ENCODE measurements at regions of chrX and their contacts with region 1.

Region 1: DNA sequence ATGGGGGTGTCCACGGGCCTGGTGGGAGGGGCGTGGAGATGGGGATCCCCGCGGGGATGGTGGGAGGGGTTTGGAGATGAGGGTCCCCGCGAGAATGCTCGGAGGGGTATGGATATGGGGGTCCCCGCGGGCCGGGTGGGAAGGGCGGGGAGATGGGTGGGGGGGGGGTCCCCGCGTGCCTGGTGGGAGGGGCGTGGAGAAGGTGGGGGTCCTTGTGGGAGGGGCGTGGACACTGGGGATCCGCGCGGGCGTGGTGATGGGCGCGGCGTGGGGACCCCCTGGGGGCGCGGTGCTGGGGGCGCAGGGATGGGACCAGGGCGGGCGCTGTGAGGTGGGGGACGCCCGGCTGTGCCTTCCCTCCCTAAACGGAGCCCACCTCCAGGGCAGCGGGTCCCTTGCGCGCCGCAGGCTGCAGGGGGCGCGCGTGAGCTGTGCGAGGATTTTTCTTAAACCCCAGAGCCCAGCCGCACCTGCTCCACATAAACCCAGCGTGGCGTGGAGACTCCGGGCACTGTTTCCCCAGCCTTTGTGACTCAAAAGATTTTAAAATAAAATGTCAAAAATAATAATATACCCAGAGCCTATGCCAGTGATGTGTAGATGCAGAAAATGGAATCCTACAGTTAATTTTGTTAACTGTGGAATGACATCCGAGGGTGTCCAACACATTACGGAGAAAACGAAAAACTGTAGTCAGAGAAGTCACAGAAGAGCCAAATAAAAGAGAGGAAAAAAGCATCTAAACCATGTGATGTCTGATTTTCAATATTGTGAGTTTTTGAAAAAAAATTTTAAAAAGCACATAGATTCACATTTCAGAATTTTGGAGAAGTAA is 1.5 kb upstream of the ASMTL start:
- DNase-seq: peak; percentile 92
- ATAC-seq: peak; percentile 29
- H3K4me3 Mint-ChIP-seq: peak overlapping the region; percentile 63
- H3K27ac Mint-ChIP-seq: peak overlapping the region; percentile 50
- H3K4me1 Mint-ChIP-seq: peaks cover 32% of the 10 kb centered on the region
- H3K27me3 Mint-ChIP-seq: no peaks in the 10 kb centered on the region
- CTCF ChIP-seq: peak; percentile 37

Region 2: GRCh38 chrX:1391707-1392375 is 62.3 kb before region 1 on chrX and contains the start of gene SLC25A6:
- CTCF ChIA-PET with region 1: no interaction called
- POLR2A ChIA-PET with region 1: no interaction called
- intact Hi-C with region 1: loop called (anchors 1 kb)
- DNase-seq: peak; percentile 100
- ATAC-seq: peak; percentile 96
- H3K4me3 Mint-ChIP-seq: peak within 1 kb of the TSS; percentile 93
- H3K27ac Mint-ChIP-seq: peak within 1 kb of the TSS; percentile 93
- H3K4me1 Mint-ChIP-seq: peaks cover 47% of the 10 kb centered on the region
- H3K27me3 Mint-ChIP-seq: no peaks in the 10 kb centered on the region
- CTCF ChIP-seq: no peak
- total RNA-seq, gene SLC25A6: 436 and 472 TPM in 2 replicates

Region 3: DNA sequence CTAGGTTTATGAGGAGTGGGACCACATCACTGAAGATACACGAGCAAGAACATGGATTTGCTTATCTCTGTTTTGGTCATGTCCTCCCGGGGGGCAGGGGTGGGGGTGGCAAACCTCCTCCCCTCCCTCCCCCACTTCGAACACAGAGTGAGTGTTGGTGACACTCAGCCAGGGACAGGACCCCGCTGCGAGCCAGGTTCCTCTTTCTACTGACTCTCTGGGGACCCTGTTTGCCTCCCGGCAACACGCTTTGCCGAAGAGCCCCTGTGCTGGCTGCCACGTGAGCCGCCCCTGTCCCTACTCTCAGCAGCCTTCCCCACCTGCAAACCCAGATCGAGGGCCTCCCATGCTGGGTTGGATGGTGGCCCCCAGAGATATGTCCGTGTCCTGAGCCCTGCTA is 48.1 kb after region 1 on chrX:
- CTCF ChIA-PET with region 1: no interaction called
- POLR2A ChIA-PET with region 1: no interaction called
- intact Hi-C with region 1: loop called (anchors 1 kb)
- DNase-seq: peak; percentile 73
- ATAC-seq: peak; percentile 85
- H3K4me3 Mint-ChIP-seq: peak overlapping the region; percentile 66
- H3K27ac Mint-ChIP-seq: no peak overlapping the region
- H3K4me1 Mint-ChIP-seq: peaks cover 25% of the 10 kb centered on the region
- H3K27me3 Mint-ChIP-seq: no peaks in the 10 kb centered on the region
- CTCF ChIP-seq: no peak

Region 4: DNA sequence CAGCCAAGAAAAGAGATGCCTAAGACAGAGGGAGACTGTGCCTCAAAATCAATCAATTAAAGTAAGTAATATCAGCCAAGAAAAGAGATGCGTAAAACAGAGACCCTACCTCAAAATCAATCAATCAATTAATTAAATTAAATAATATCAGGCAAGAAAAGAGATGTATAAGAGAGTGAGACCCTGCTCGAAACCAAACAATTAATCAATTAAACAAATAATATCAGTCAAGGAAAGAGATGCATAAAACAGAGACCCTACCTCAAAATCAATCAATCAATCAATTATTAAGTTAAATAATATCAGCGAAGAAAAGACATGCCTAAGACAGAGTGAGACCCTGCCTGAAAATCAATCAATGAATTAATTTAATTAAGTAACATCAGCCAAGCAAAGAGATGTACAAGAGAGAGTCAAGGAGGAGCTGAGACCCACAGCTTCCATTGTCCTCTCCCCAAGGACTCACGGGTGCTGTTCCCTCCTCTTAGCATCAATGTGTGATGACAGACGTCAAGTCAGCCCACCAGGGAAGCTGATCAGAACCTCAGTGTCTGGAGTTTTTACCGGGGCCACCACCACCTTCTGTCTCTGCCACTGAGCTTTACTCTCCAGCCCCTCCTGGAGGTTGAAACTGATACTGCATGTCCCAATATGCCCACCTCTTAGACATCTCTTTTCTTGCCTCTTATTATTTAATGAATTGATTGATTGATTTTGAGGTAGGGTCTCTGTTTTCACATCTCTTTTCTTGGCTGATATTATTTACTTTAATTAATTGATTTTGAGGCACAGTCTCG is 126.8 kb after region 1 on chrX:
- CTCF ChIA-PET with region 1: no interaction called
- POLR2A ChIA-PET with region 1: no interaction called
- intact Hi-C with region 1: loop called (anchors 1 kb)
- DNase-seq: no peak
- ATAC-seq: peak; percentile 80
- H3K4me3 Mint-ChIP-seq: no peak overlapping the region
- H3K27ac Mint-ChIP-seq: no peak overlapping the region
- H3K4me1 Mint-ChIP-seq: peaks cover 27% of the 10 kb centered on the region
- H3K27me3 Mint-ChIP-seq: no peaks in the 10 kb centered on the region
- CTCF ChIP-seq: peak; percentile 51

Region 5: DNA sequence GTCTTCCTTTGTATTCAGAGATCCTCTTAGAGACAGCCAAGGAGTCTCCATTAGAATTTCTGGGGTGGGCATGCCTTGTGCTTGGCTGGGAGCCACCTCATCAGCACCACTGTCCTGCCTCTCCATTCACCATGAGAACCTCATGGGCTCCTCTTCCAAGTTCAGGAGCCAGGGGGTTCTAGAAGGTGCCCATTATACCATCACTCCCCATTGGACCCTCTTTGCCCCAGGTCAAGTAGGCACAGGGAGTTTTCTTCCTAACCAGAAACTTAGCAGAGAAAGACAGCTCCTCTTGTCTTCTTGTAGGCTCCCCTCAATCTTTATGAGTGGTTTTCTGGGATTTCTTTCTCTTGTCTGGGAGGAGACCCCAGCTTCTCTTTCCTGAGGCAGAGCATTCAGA is 191.8 kb after region 1 on chrX:
- CTCF ChIA-PET with region 1: no interaction called
- POLR2A ChIA-PET with region 1: no interaction called
- intact Hi-C with region 1: no loop called
- DNase-seq: no peak
- ATAC-seq: no peak
- H3K4me3 Mint-ChIP-seq: no peak overlapping the region
- H3K27ac Mint-ChIP-seq: no peak overlapping the region
- H3K4me1 Mint-ChIP-seq: peaks cover 3% of the 10 kb centered on the region
- H3K27me3 Mint-ChIP-seq: peaks cover 12% of the 10 kb centered on the region
- CTCF ChIP-seq: no peak

Region 6: DNA sequence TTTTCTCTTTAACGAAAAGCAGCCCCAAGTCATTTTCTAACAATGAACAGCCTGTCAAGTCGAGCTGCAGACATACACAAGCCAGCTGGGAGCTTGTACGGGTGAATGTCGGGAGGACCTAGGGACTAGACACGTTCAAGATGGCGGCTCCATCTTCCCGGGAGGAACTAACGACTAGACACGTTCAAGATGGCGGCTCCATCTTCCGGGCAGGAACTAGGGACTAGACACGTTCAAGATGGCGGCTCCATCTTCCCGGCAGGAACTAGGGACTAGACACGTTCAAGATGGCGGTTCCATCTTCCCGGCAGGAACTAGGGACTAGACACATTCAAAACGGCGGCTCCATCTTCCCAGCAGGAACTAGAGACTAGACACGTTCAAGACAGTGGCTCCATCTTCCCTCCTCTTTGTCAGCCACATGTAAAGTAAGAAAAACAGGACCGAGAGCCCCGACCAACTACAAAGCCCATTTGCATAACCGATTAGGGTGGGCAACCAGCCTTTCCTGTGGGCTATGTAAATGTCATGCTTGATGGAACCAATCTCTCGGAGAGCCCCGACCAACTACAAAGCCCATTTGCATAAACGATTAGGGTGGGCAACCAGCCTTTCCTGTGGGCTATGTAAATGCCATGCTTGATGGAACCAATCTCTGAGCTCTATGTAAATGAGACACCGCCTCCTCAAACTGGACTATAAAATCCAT is 871.1 kb after region 1 on chrX:
- CTCF ChIA-PET with region 1: no interaction called
- POLR2A ChIA-PET with region 1: no interaction called
- intact Hi-C with region 1: loop called (anchors 2 kb)
- DNase-seq: no peak
- ATAC-seq: peak; percentile 68
- H3K4me3 Mint-ChIP-seq: peak overlapping the region; percentile 83
- H3K27ac Mint-ChIP-seq: peak overlapping the region; percentile 87
- H3K4me1 Mint-ChIP-seq: peaks cover 46% of the 10 kb centered on the region
- H3K27me3 Mint-ChIP-seq: no peaks in the 10 kb centered on the region
- CTCF ChIP-seq: no peak

Region 7: DNA sequence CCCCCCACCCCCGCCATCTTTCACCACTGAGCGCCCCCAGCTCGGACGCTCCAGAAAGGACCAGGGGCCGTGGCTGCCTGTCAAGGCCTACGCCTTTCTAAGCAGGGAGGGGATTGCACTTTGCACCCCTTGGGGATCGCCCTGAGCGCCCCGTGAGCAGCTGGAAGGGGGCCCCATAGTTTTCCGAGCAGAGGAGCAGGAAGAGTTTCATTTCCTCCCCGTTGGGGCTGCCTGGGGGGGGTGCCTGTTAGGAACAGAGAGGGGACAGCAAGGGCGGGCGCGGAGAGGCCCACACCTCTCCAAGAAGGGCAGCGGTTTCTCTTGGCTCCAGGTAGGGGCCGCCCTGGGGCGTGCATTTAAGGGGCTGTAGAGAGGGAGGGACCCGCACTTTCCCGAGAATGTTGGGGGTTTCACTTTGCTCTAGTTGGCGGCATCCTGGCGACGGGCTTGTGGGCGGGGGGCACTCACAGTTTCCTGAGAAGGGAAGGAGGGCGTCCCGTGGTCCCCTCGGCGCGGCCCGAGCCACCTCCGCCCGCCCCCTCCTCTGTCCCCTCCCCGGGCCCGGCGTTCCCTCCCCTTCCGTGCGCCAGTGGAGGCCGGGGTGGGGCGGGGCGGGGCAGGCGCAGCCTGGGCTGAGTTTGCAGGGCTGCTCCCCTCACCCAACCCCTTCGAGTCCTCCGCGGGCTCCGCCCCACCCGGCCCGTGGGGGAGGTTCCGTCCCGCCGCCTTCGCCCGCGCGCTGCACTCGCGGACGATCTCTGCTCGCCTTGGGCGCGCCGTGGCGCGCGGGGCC is 1154.7 kb after region 1 on chrX:
- CTCF ChIA-PET with region 1: no interaction called
- POLR2A ChIA-PET with region 1: no interaction called
- intact Hi-C with region 1: loop called (anchors 1 kb)
- DNase-seq: peak; percentile 84
- ATAC-seq: peak; percentile 97
- H3K4me3 Mint-ChIP-seq: peak overlapping the region; percentile 93
- H3K27ac Mint-ChIP-seq: peak overlapping the region; percentile 81
- H3K4me1 Mint-ChIP-seq: peaks cover 36% of the 10 kb centered on the region
- H3K27me3 Mint-ChIP-seq: no peaks in the 10 kb centered on the region
- CTCF ChIP-seq: no peak

Measured in activated B cell treated with CpG ODN at 0.5 μM for 24 hours (primary cell).